Activated B cell treated with CpG ODN at 0.5 μM for 24 hours (primary cell): ENCODE measurements at regions of chr9 and their contacts with region 1.

Region 1: GRCh38 chr9:8183618-8184017 is 384.0 kb upstream of the DMAC1 start:
- DNase-seq: no peak
- ATAC-seq: no peak
- H3K4me3 Mint-ChIP-seq: no peak overlapping the region
- H3K27ac Mint-ChIP-seq: no peak overlapping the region
- H3K4me1 Mint-ChIP-seq: peaks cover 4% of the 10 kb centered on the region
- H3K27me3 Mint-ChIP-seq: no peaks in the 10 kb centered on the region
- CTCF ChIP-seq: no peak

Region 2: GRCh38 chr9:7045361-7045760 is 1138.3 kb before region 1 on chr9:
- CTCF ChIA-PET with region 1: no interaction called
- POLR2A ChIA-PET with region 1: no interaction called
- intact Hi-C with region 1: no loop called
- DNase-seq: no peak
- ATAC-seq: no peak
- H3K4me3 Mint-ChIP-seq: no peak overlapping the region
- H3K27ac Mint-ChIP-seq: no peak overlapping the region
- H3K4me1 Mint-ChIP-seq: no peaks in the 10 kb centered on the region
- H3K27me3 Mint-ChIP-seq: no peaks in the 10 kb centered on the region
- CTCF ChIP-seq: no peak

Region 3: DNA sequence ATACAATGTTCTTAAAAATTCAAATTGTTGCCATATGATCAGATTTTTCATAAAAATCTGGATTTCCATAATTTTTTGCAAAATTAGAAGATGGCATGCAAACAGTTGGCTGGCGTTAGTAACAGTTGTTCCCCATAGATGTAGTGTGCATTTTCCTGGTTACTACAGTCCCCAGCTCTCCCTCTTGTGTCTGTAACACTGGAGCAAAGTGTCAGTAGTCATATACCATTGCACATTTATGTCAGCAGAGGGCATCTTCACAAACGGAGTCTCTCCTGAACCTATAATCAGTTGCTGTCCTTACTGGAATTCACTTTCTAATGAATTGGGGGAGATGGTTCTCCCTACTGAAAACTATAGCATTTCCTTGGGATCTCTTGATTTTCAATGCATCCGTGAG is 339.4 kb before region 1 on chr9:
- CTCF ChIA-PET with region 1: interaction called, 3 read pairs
- POLR2A ChIA-PET with region 1: no interaction called
- intact Hi-C with region 1: loop called (anchors 1 kb)
- DNase-seq: no peak
- ATAC-seq: no peak
- H3K4me3 Mint-ChIP-seq: no peak overlapping the region
- H3K27ac Mint-ChIP-seq: no peak overlapping the region
- H3K4me1 Mint-ChIP-seq: peaks cover 5% of the 10 kb centered on the region
- H3K27me3 Mint-ChIP-seq: no peaks in the 10 kb centered on the region
- CTCF ChIP-seq: no peak